Prostate gland (tissue), 2 donors: ENCODE measurements at regions of chr3 and their contacts with region 1.

Region 1: GRCh38 chr3:128426128-128426921 is 40.4 kb downstream of the DNAJB8 start:
- DNase-seq: no peak
- H3K4me3 ChIP-seq: peak overlapping the region in 1 of 2 donors; percentile 7
- H3K27ac ChIP-seq: no peak overlapping the region
- H3K4me1 ChIP-seq: peaks cover 24% of the 10 kb centered on the region
- H3K27me3 ChIP-seq: no peaks in the 10 kb centered on the region
- CTCF ChIP-seq: peak; percentile 82 to 98 (median 92)
- POLR2A ChIP-seq: no peak

Region 2: DNA sequence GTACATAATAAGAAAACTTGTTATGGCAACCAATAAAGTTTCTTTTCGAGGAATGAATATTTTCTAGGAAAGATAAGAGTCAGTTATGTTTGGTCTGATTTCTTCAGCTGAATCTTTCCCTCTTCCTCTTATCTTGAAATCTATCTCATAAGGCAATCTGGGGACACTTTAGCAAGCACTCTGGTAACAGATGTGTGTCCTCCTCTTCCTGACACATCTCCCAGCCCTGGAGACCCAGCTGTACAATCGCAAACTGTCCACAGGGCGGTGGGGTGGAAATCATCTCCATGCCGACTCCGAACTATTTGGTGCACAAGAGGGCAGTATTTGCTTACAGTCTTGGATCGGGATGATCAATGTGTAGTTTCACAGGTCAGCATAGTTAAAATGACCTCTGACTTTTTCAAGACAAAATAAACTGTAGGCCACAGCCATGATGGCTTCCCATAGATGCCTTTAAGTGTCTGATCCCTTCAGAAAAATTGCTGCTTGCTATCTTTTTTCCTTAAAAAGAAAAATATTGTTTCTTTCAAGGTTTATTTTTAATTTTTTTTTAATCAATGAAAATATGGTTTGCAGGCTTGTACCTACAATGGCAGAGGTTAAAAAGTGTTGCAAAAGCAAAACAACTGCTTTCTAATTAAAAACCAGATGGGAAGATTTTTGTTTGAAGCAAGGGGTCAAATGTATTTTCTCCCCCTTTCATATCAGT is 255.4 kb before region 1 on chr3:
- intact Hi-C with region 1: loop called (anchors 5 kb)
- DNase-seq: peak; percentile 60
- H3K4me3 ChIP-seq: no peak overlapping the region
- H3K27ac ChIP-seq: no peak overlapping the region
- H3K4me1 ChIP-seq: no peaks in the 10 kb centered on the region
- H3K27me3 ChIP-seq: no peaks in the 10 kb centered on the region
- CTCF ChIP-seq: peak; percentile 34 to 89 (median 71)
- POLR2A ChIP-seq: no peak

Region 3: GRCh38 chr3:128178782-128179483 is 247.4 kb before region 1 on chr3:
- intact Hi-C with region 1: loop called (anchors 5 kb)
- DNase-seq: no peak
- H3K4me3 ChIP-seq: no peak overlapping the region
- H3K27ac ChIP-seq: no peak overlapping the region
- H3K4me1 ChIP-seq: no peaks in the 10 kb centered on the region
- H3K27me3 ChIP-seq: no peaks in the 10 kb centered on the region
- CTCF ChIP-seq: no peak
- POLR2A ChIP-seq: no peak

Region 4: DNA sequence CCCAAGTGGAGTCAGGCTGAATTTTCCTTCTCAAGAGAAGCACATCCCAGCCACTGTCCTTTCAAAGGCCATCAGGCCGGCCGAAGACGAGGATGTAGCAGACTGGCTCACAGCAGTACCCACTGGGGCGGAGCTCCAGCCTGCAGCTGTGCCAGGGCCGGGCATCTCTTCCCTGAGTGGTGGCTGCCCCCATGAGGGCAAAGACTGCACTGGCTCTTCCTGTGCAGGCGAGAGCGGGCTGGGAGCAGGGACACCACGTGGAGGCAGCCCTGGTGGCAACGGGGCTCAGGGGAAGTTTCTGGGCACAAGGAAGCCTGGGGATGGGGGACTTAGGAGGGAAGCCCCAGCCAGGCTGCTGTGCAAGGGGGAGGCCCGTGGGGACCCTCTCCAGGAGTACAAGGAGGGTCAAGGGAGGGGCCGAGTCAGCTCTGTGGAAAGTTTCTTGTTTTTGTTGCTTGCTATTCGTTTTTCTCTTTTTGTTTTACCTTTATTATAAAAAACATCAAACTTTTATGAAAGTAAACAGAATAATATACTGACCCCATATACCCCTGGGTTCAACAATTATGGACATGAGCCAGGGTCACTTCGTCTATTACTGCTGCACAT is 158.2 kb after region 1 on chr3:
- intact Hi-C with region 1: loop called (anchors 5 kb)
- DNase-seq: peak; percentile 74
- H3K4me3 ChIP-seq: no peak overlapping the region
- H3K27ac ChIP-seq: no peak overlapping the region
- H3K4me1 ChIP-seq: no peaks in the 10 kb centered on the region
- H3K27me3 ChIP-seq: no peaks in the 10 kb centered on the region
- CTCF ChIP-seq: peak; percentile 27 to 93 (median 62)
- POLR2A ChIP-seq: no peak